ENCODE measurements at regions of chr9 and their contacts with region 1.

Region 1: GRCh38 chr9:126704873-126705766 is 91.4 kb downstream of the LMX1B start:
- DNase-seq: peak; percentile 87
- ATAC-seq: peak; percentile 85
- H3K4me3 ChIP-seq: peak overlapping the region; percentile 22
- H3K27ac ChIP-seq: no peak overlapping the region
- H3K4me1 ChIP-seq: peaks cover 10% of the 10 kb centered on the region
- H3K27me3 ChIP-seq: peaks cover 49% of the 10 kb centered on the region
- CTCF ChIP-seq: peak; percentile 90

Region 2: DNA sequence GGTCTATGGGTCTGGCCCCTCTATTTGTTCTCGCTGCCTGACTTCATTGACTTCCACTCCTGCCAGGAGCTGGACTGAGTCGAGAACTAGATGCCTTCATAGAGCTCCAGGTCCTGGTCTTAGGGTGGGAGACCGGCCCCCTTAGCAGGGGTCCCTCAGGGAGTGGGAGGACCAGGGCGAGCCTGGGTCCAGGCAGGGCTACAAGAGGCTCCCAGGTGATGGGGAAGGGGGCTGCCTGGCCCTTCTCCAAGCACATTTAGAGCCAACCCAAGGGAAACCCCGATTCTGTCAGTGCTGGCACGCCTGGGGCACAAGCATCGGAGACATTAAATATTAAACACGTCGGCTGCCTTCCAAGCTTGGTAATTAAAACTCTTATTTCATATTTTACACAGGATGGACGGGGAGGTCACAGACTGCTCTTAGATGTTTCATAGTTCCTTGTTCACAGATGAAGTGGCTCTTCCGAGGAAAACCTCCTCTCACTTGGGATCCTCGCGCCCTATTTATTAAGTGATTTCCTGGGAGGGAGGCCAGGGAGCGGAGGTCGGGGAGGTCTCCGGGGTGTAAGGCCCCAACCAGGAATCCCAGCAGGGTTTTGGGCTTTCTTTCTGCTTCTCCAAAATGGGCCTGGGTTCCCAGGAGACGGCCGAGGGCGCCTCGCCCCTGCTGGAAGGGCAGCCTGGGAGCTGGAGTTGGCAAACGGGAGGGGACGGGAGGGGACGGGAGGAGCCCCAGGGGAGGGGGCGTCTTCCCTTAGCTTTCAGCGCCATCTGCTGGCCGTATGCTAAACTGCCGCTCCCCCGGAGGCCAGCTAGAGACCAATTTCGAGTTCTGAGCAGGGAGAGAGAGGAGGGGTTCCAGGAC is 76.3 kb after region 1 on chr9:
- intact Hi-C with region 1: loop called (anchors 5 kb)
- DNase-seq: peak; percentile 91
- ATAC-seq: peak; percentile 97
- H3K4me3 ChIP-seq: no peak overlapping the region
- H3K27ac ChIP-seq: no peak overlapping the region
- H3K4me1 ChIP-seq: no peaks in the 10 kb centered on the region
- H3K27me3 ChIP-seq: peaks cover 31% of the 10 kb centered on the region
- CTCF ChIP-seq: peak; percentile 97